ENCODE measurements at regions of chr5 and their contacts with region 1.

Region 1: GRCh38 chr5:134073404-134073803 is 41.1 kb upstream of the TCF7 start:
- DNase-seq: no peak
- H3K27ac ChIP-seq: no peak overlapping the region
- CTCF ChIP-seq: no peak

Region 2: DNA sequence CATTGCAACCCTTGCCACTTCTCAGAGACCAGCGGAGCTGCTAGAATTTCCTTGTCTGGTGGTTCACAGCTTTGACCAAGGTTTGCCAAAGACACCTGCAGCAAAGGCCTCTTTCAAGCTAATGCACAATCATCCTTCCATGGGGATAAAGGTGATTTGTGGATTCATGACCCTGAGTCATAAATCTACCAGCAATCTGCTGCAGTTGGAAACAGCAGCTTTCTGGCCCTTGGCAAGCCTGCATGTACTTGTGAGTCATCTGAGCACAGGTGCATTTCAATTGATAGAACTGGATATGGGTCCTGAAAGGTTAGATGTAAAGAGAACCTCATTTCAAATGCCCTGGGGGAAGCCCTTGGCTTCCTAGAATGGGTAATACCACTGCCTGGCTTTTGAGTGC is 19.5 kb after region 1 on chr5:
- CTCF ChIA-PET with region 1: interaction called, 5 read pairs
- POLR2A ChIA-PET with region 1: interaction called, 12 read pairs
- DNase-seq: peak; percentile 91
- H3K27ac ChIP-seq: no peak overlapping the region
- CTCF ChIP-seq: no peak

Region 3: GRCh38 chr5:134304311-134304710 is 230.9 kb after region 1 on chr5:
- CTCF ChIA-PET with region 1: no interaction called
- POLR2A ChIA-PET with region 1: no interaction called
- DNase-seq: no peak
- H3K27ac ChIP-seq: no peak overlapping the region
- CTCF ChIP-seq: no peak